ENCODE measurements at regions of chr19 and their contacts with region 1.

Region 1: DNA sequence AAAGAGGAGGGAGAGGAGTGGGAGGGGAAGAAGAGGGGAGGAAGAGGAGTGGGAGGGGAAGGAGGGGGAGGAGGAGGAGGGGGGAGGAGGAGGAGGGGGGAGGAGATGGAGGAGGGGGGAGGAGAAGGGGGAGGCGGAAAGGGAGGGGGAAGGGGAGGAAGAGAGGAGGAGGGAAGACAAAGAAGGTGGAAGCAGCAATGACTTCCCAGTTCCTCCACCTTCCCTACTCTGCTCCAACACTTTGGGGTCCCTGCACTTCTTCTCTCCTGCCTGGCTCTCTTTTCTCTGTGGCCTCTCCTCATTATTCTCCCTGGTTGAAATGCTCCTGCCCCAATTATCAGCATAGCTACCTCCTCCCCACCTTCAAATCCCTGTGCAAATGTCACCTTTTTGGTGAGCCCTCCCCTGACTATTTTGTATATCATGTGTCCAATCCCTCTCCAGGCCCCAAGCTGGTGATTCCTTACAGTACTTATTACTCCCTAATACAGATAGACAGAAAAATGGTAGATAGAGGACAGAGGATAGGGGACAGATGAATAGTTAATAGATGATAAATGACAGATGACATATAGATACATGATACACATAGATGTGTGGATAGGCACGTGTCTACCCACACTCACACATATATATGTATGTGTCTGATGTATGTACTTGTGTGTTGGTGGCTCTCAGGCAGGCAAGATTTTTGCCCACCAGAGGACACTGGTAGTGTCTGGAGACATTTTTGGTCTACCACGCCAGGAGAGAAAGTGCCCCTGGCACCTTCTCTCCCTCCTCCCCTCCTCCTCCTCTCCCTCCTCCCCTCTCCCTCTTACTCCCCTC is 25.2 kb downstream of the NLRP9 start:
- DNase-seq: no peak
- H3K4me3 ChIP-seq: no peak overlapping the region
- H3K27ac ChIP-seq: no peak overlapping the region
- H3K4me1 ChIP-seq: no peaks in the 10 kb centered on the region
- H3K27me3 ChIP-seq: peaks cover 0 to 34% of the 10 kb centered on the region in 2 donors
- CTCF ChIP-seq: no peak
- POLR2A ChIP-seq: no peak

Region 2: GRCh38 chr19:55766466-55766865 is 53.4 kb after region 1 on chr19:
- intact Hi-C with region 1: no loop called
- DNase-seq: no peak
- H3K4me3 ChIP-seq: no peak overlapping the region
- H3K27ac ChIP-seq: no peak overlapping the region
- H3K4me1 ChIP-seq: no peaks in the 10 kb centered on the region
- H3K27me3 ChIP-seq: no peaks in the 10 kb centered on the region
- CTCF ChIP-seq: no peak
- POLR2A ChIP-seq: no peak

Region 3: DNA sequence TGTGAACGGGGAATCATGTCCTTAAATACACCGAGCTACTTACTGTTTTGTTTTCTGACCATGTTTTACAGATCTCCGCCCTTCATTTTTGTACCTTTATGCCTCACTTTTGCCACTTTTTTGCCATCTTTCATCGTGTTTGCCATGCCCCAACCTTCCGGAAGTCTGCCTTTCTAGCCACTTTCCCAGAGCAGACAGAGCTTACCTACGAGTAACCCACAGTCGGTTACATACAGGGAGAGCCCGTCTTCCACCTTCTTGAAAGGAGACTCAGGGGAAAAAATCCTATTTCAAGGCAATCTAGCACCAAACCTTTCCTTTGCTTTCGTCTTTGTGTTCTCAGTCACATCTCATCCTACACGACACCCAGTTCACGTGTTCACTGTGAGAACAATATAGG is 82.0 kb after region 1 on chr19:
- intact Hi-C with region 1: loop called (anchors 2 kb)
- DNase-seq: no peak
- H3K4me3 ChIP-seq: no peak overlapping the region
- H3K27ac ChIP-seq: no peak overlapping the region
- H3K4me1 ChIP-seq: no peaks in the 10 kb centered on the region
- H3K27me3 ChIP-seq: no peaks in the 10 kb centered on the region
- CTCF ChIP-seq: no peak
- POLR2A ChIP-seq: no peak